ENCODE measurements at regions of chr5 and their contacts with region 1.

Region 1: DNA sequence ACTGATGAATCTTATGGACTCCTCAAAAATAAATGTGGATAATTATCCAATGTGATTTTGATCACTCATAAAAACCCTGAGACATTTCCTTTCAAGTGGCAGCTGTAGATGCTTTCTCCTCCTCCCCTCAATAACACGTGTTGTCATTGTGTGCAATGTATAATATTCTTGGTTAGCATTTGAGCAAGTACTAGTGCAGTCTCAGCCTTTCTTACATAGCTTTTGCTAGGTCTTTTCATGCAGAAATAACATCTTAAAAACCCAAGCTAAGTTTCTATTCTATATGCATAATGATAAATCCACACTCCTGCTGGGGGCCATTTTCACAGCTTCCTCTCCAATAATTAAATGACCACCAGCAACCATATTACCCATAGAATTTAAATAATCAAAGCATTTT is 1835.2 kb upstream of the NUDT12 start:
- DNase-seq: no peak
- H3K4me3 ChIP-seq: no peak overlapping the region
- H3K27ac ChIP-seq: no peak overlapping the region
- H3K4me1 ChIP-seq: no peaks in the 10 kb centered on the region
- H3K27me3 ChIP-seq: no peaks in the 10 kb centered on the region
- CTCF ChIP-seq: no peak

Region 2: DNA sequence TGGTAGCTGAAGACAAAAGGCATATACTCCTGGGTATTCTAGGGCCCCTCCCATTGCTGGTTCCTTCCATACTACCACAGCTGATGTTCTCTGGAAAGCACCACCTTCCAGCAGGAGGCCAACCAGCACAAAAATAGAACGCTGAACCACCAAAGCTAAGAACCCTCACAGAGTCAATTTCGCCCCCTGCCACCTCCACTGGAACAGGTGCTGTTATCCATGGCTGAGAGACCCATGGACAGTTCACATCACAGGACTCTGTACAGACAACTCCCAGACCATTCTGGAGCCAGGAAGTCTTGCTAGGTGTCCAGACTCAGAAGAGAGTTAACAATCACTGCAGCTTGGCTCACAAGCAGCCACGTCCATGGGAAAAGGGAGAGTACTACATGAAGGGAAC is 16.3 kb after region 1 on chr5:
- CTCF ChIA-PET with region 1: no interaction called
- POLR2A ChIA-PET with region 1: no interaction called
- intact Hi-C with region 1: loop called (anchors 1 kb)
- DNase-seq: no peak
- H3K4me3 ChIP-seq: no peak overlapping the region
- H3K27ac ChIP-seq: no peak overlapping the region
- H3K4me1 ChIP-seq: no peaks in the 10 kb centered on the region
- H3K27me3 ChIP-seq: no peaks in the 10 kb centered on the region
- CTCF ChIP-seq: no peak

Region 3: GRCh38 chr5:105475401-105475800 is 77.7 kb after region 1 on chr5:
- CTCF ChIA-PET with region 1: no interaction called
- POLR2A ChIA-PET with region 1: no interaction called
- intact Hi-C with region 1: no loop called
- DNase-seq: no peak
- H3K4me3 ChIP-seq: no peak overlapping the region
- H3K27ac ChIP-seq: no peak overlapping the region
- H3K4me1 ChIP-seq: no peaks in the 10 kb centered on the region
- H3K27me3 ChIP-seq: no peaks in the 10 kb centered on the region
- CTCF ChIP-seq: no peak

Measured in PC-9 (cell line).